ENCODE measurements at regions of chr10 and their contacts with region 1.

Region 1: DNA sequence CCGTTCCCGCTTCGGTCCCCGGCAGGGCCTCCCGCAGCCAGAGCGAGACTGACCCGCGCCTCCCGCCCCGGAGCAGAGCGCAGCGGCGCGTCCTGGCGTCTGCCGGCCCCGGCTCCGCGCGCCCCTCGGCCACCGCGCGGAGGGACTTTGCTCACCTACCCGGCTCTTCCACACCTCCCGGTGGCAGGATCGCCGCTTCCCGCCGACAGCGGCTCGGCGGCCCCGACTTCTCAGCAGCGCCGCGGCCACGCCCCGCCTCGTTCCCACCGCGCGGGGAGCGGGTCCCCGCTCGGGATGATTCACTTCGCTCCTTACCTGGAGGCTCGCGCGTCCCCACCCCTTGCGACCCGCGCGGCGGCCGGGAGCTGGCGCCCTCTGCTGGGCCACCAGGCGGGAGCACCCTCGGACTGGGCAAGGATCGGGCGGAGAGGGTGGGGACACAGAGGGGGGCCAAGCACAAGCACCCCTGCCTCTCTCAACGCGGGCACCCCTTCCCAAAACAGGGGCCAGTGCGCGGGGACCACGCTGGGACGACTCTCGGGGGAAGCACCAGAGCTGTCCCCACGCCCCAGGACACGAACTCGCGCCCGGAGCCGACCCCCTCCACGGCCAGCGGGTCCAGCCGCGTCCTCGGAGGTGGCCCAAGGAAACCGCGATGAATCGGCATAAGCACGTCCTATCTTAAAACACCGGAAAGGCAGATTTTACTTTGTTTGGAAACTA is 101.0 kb upstream of the SVIL start:
- DNase-seq: peak; percentile 95
- H3K4me3 Mint-ChIP-seq: peak overlapping the region; percentile 85
- H3K27ac Mint-ChIP-seq: peak overlapping the region; percentile 85
- H3K4me1 Mint-ChIP-seq: peaks cover 11% of the 10 kb centered on the region
- H3K27me3 Mint-ChIP-seq: peaks cover 39% of the 10 kb centered on the region

Region 2: GRCh38 chr10:29635711-29636144 is 100.0 kb before region 1 on chr10:
- intact Hi-C with region 1: loop called (anchors 5 kb)
- DNase-seq: no peak
- H3K4me3 Mint-ChIP-seq: peak overlapping the region; percentile 32
- H3K27ac Mint-ChIP-seq: no peak overlapping the region
- H3K4me1 Mint-ChIP-seq: peaks cover 29% of the 10 kb centered on the region
- H3K27me3 Mint-ChIP-seq: no peaks in the 10 kb centered on the region

Region 3: DNA sequence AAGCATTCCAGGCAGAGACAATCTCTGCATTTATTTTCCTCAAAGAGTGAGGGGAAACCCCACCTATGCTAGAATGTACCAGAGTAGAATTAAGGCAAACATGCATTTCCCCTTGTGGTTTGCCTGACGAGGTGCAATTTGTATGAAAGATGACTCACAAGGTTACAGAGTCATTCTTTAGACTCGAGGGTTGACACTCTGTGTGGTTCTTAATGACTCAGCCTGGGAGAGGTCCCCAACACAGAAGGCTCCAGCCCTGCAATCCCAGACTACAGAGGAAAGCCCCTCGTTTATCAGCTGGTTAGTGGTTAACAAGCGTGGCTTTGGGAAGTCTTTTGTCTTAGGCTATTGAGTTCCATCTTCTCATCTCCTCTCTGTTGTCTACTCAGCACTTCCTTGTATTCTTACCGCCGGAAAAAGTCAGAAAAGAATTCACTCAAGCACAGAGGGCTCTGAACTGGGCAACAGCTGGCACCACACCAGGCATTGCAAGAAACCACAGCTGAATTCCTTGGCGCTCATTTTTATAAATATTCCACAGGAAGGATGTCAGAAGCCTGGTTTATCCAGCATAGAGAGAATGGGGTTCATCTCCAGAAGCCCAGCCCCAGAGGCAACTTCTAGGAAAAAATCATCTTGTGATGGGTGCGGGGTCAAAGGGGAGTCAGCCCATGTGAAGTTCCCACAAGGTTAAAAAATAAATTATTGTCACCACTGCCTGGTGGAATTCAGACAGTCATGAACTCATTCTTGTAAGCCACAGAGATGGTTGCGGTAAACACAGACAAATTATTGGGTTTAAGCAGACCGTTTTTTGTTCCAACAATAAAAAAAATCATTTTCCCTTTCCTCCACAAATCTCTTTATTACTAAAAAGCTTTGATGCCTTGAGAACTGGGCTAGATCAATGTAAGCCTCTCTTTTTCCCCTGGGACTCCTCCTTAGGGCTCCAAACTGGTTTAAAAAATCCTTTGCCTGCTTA is 76.5 kb before region 1 on chr10:
- intact Hi-C with region 1: loop called (anchors 2 kb)
- DNase-seq: peak; percentile 89
- H3K4me3 Mint-ChIP-seq: peak overlapping the region; percentile 56
- H3K27ac Mint-ChIP-seq: peak overlapping the region; percentile 67
- H3K4me1 Mint-ChIP-seq: peaks cover 18% of the 10 kb centered on the region
- H3K27me3 Mint-ChIP-seq: peaks cover 46% of the 10 kb centered on the region

Region 4: DNA sequence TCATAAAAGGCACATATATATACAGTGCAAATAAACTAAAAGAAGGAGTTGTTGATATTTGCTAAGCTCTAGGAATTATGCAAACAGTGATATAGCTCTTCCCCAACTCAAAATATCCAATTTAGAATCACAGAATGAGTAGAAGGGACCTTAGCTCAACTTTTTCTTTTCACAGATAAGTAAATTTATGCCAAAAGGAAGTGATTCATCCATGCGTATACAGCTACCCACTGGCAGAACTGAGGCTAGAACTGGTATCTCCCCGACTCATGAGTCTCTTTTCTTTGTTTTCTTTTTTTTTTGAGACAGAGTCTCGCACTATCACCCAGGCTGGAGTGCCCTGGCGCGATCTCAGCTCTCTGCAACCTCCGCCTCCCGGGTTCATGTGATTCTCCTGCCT is 46.8 kb before region 1 on chr10:
- intact Hi-C with region 1: loop called (anchors 2 kb)
- DNase-seq: no peak
- H3K4me3 Mint-ChIP-seq: no peak overlapping the region
- H3K27ac Mint-ChIP-seq: no peak overlapping the region
- H3K4me1 Mint-ChIP-seq: peaks cover 15% of the 10 kb centered on the region
- H3K27me3 Mint-ChIP-seq: peaks cover 3% of the 10 kb centered on the region

Measured in activated CD4-positive, alpha-beta T cell treated with anti-CD3 and anti-CD28 coated beads, Interleukin-2, amount 10 ng/mL, durations not matched to agents 24 days and 14 days (primary cell).